ENCODE measurements at regions of chr10 and their contacts with region 1.

Region 1: DNA sequence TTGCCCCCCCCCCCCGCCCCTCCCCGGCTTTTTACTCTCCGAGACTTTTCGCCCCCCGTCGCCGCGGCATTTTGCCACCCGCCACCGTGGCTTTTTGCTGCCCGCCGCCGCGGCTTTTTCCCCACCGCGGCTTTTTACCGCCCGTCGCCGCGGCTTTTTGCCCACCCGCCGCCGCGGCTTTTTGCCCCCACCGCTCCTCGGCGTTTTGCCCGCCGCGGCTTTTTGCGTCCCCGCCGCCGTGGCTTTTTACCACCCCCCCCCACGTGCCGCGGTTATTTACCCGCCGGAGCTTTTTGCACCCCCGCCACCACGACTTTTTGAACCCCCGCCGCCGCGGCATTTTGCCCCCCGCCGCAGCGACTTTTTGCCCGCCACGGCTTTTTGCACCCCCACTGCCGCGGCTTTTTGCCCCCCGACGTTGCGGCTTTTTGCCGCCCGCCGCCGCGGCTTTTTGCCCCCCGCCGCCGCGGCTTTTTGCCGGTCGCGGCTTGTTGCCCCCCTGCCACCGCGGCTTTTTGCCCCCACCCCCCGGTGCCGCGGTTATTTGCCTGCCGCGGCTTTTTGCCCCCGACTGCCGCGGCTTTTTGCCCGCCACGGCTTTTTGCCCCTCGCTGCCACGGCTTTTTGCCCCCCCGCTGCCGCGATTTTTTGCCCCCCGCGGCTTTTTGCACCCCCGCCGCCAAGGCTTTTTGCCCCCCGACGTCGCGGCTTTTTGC is 461.1 kb downstream of the ZNF33B start:
- DNase-seq: no peak
- H3K4me3 Mint-ChIP-seq: no peak overlapping the region
- H3K27ac Mint-ChIP-seq: no peak overlapping the region
- H3K4me1 Mint-ChIP-seq: no peaks in the 10 kb centered on the region
- H3K27me3 Mint-ChIP-seq: peaks cover 61% of the 10 kb centered on the region

Region 2: DNA sequence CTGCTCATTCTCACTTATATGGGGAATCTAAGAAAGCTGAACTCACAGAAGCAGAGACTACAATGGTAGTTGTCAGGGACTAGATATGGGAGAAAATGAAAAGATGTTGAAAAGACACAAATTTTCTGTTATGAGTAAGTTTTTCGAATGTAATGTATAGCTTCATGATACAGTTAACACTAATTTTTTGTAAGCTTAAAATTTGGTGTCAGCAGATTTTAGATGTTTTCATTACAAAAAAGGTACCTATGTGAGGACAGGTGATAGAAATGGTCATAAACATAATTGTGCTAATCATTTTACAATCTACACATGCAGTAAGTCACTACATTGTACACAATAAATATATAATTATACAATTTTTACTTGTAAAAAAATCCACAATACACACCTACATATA is 174.5 kb after region 1 on chr10:
- CTCF ChIA-PET with region 1: no interaction called
- intact Hi-C with region 1: no loop called
- DNase-seq: no peak
- H3K4me3 Mint-ChIP-seq: no peak overlapping the region
- H3K27ac Mint-ChIP-seq: no peak overlapping the region
- H3K4me1 Mint-ChIP-seq: no peaks in the 10 kb centered on the region
- H3K27me3 Mint-ChIP-seq: no peaks in the 10 kb centered on the region

Region 3: DNA sequence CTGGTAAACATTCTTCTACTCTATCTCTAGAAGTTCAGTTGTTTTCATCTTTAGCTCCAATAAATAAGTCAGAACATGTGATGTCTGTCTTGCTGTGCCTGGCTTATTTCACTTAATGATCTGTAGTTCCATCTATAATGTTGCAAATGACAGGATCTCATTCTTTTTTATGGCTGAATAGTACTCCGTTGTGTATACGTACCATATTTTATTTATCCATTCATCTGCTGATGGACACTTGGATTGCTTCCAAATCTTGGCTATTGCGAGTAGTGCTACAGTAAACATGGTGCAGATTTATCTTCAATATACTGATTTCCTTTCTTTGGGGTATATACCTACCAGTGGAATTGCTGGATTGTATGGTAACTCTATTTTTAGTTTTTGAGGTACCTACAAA is 336.7 kb after region 1 on chr10:
- CTCF ChIA-PET with region 1: no interaction called
- intact Hi-C with region 1: no loop called
- DNase-seq: no peak
- H3K4me3 Mint-ChIP-seq: no peak overlapping the region
- H3K27ac Mint-ChIP-seq: no peak overlapping the region
- H3K4me1 Mint-ChIP-seq: peaks cover 2% of the 10 kb centered on the region
- H3K27me3 Mint-ChIP-seq: no peaks in the 10 kb centered on the region

Region 4: GRCh38 chr10:42543840-42544372 is 366.7 kb after region 1 on chr10:
- CTCF ChIA-PET with region 1: no interaction called
- intact Hi-C with region 1: loop called (anchors 10 kb)
- DNase-seq: no peak
- H3K4me3 Mint-ChIP-seq: no peak overlapping the region
- H3K27ac Mint-ChIP-seq: no peak overlapping the region
- H3K4me1 Mint-ChIP-seq: peaks cover 17% of the 10 kb centered on the region
- H3K27me3 Mint-ChIP-seq: no peaks in the 10 kb centered on the region

Region 5: GRCh38 chr10:42754155-42755027 is 577.2 kb after region 1 on chr10:
- CTCF ChIA-PET with region 1: no interaction called
- intact Hi-C with region 1: no loop called
- DNase-seq: peak; percentile 31
- H3K4me3 Mint-ChIP-seq: peak overlapping the region; percentile 67
- H3K27ac Mint-ChIP-seq: no peak overlapping the region
- H3K4me1 Mint-ChIP-seq: peaks cover 7% of the 10 kb centered on the region
- H3K27me3 Mint-ChIP-seq: peaks cover 59% of the 10 kb centered on the region

Region 6: GRCh38 chr10:43105102-43105785 is 928.0 kb after region 1 on chr10:
- CTCF ChIA-PET with region 1: no interaction called
- intact Hi-C with region 1: loop called (anchors 10 kb)
- DNase-seq: peak; percentile 74
- H3K4me3 Mint-ChIP-seq: peak overlapping the region; percentile 63
- H3K27ac Mint-ChIP-seq: no peak overlapping the region
- H3K4me1 Mint-ChIP-seq: peaks cover 4% of the 10 kb centered on the region
- H3K27me3 Mint-ChIP-seq: peaks cover 13% of the 10 kb centered on the region

Measured in activated naive CD4-positive, alpha-beta T cell treated with anti-CD3 and anti-CD28 coated beads for 36 hours (primary cell).